Caco-2 (cell line): ENCODE measurements at regions of chr19 and their contacts with region 1.

Region 1: GRCh38 chr19:34364830-34365462 is at the start of gene GPI:
- DNase-seq: peak; percentile 52 to 62
- H3K4me3 ChIP-seq: peak within 1 kb of the TSS; percentile 96
- H3K4me3 Mint-ChIP-seq: peak within 1 kb of the TSS; percentile 88
- H3K27ac Mint-ChIP-seq: peak within 1 kb of the TSS; percentile 78
- H3K4me1 ChIP-seq: peaks cover 14% of the 10 kb centered on the region
- H3K4me1 Mint-ChIP-seq: peaks cover 30% of the 10 kb centered on the region
- H3K27me3 ChIP-seq: no peaks in the 10 kb centered on the region
- H3K27me3 Mint-ChIP-seq: no peaks in the 10 kb centered on the region
- CTCF ChIP-seq: no peak
- total RNA-seq, gene GPI: 329 and 381 TPM in 2 replicates

Region 2: DNA sequence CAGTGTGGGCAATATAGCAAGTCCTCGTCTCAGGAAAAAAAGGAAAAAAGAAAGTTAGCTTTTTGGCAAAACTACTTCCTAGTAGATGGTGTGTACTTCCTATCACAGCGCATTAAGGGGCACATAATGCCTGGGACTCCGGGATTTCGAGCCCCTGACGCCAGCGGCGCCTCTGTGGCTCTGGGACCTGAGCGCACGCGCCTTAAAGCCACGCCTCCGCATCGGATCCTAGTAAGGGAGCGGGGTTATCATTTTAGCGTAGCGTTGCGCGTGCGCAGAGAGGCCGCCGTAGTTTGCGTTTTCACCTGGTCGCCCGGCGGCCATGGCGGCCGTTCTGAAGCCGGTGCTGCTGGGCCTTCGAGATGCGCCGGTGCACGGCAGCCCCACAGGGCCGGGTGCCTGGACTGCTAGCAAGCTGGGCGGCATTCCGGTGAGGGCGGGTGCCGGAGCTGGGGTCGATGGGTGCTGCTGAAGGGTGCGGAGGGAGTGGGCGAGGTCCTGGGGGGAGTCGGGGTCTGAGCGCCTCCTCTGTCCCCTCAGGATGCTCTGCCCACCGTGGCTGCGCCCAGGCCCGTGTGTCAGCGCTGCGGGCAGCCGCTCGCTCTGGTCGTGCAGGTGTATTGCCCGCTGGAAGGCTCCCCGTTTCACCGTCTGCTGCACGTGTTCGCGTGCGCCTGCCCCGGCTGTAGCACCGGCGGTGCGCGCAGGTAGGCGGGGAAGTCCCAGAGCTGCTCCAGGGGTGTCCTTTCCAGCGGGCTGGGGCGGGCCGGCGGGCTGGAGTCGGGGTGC is 39.4 kb after region 1 on chr19 and contains the start of gene PDCD2L:
- CTCF ChIA-PET with region 1: no interaction called
- POLR2A ChIA-PET with region 1: no interaction called
- intact Hi-C with region 1: loop called (anchors 2 kb)
- DNase-seq: peak; percentile 94
- H3K4me3 ChIP-seq: peak within 1 kb of the TSS; percentile 89
- H3K4me3 Mint-ChIP-seq: peak within 1 kb of the TSS; percentile 93
- H3K27ac Mint-ChIP-seq: peak within 1 kb of the TSS; percentile 89
- H3K4me1 ChIP-seq: no peaks in the 10 kb centered on the region
- H3K4me1 Mint-ChIP-seq: no peaks in the 10 kb centered on the region
- H3K27me3 ChIP-seq: no peaks in the 10 kb centered on the region
- H3K27me3 Mint-ChIP-seq: no peaks in the 10 kb centered on the region
- CTCF ChIP-seq: no peak
- total RNA-seq, gene PDCD2L: 33.2 and 40.2 TPM in 2 replicates